Activated CD4-positive, alpha-beta memory T cell treated with anti-CD3 and anti-CD28 coated beads, Interleukin-2, amount 10 ng/mL, durations not matched to agents 7 days and 5 days (primary cell): ENCODE measurements at regions of chr9 and their contacts with region 1.

Region 1: DNA sequence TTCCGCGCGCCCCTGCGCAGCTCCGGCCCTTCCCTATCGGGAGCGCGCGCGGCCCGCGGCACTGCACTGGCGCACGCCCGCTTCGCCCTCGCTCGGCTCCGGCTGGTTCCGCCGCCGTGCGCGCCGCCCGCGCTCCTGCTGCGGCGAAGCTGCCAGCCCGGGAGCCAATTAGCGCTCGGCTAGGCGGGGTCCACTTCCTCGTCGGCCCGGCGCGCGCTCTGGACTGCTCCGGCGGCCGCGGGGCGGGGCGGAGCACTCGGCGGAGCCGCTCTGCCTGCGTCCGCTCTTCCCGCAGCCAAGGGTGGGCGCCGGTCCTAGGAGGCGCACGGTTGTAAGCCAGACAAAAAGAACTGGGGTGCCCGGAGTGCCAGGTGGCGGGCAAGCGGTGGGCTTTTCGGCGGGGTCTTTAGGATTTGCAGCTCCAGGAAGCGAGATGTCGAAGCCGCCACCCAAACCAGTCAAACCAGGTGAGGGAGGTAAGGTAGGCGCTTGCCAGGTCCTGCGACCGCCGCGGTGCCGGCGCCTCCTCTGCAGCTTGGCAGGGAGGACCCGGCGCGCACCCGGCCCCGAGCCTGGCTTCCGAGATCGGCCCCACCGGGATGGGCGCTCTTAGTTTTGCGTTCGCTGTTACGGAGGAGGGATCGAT is at the start of gene OSTF1:
- DNase-seq: peak; percentile 95
- H3K4me3 Mint-ChIP-seq: peak within 1 kb of the TSS; percentile 100
- H3K27ac Mint-ChIP-seq: peak within 1 kb of the TSS; percentile 97
- H3K4me1 Mint-ChIP-seq: peaks cover 63% of the 10 kb centered on the region
- H3K27me3 Mint-ChIP-seq: no peaks in the 10 kb centered on the region
- total RNA-seq, gene OSTF1: 253 to 255 TPM

Region 2: GRCh38 chr9:74773886-74774479 is 314.4 kb before region 1 on chr9:
- CTCF ChIA-PET with region 1: interaction called, 14 read pairs
- POLR2A ChIA-PET with region 1: interaction called, 4 read pairs
- DNase-seq: peak; percentile 76
- H3K4me3 Mint-ChIP-seq: no peak overlapping the region
- H3K27ac Mint-ChIP-seq: no peak overlapping the region
- H3K4me1 Mint-ChIP-seq: peaks cover 16% of the 10 kb centered on the region
- H3K27me3 Mint-ChIP-seq: peaks cover 13% of the 10 kb centered on the region

Region 3: DNA sequence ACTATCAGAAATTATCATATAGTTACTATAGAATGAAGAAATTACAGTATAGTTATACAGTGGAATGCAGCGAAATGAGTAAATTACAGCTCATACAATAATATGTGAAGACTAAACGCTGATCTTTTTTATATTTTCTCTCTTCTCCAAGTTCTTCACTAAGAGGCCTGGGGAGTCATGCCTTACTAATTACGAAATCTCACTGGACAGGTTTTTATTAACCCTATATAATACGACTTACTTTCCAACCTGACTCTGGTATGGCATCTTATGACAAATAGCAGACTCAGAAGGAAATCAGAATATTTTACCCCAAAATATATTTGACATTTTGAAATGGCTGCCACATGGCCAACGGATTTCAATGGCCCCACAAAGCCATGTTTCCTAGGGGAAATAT is 69.4 kb before region 1 on chr9:
- CTCF ChIA-PET with region 1: interaction called, 3 read pairs
- POLR2A ChIA-PET with region 1: interaction called, 98 read pairs
- DNase-seq: no peak
- H3K4me3 Mint-ChIP-seq: no peak overlapping the region
- H3K27ac Mint-ChIP-seq: no peak overlapping the region
- H3K4me1 Mint-ChIP-seq: peaks cover 36% of the 10 kb centered on the region
- H3K27me3 Mint-ChIP-seq: no peaks in the 10 kb centered on the region

Region 4: DNA sequence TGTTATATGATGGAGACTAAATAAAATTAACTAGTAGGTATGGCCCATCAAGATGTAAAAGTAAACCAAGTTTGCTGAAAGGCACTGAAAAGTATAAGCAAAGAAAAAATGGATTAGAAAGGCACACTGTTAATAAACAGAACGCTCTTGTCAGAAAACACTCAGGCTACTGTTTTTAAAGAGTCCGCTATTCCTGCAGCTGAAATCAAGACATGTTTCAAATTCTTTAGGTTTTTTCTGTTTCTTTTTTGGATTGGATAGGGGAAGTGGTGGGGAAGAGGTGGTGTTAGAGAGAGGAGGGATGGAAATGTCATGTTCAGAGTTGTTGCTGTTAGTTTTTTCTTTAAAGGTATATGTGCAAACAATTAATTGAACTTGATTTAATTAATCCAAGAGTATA is 17.5 kb after region 1 on chr9:
- CTCF ChIA-PET with region 1: interaction called, 17 read pairs
- POLR2A ChIA-PET with region 1: interaction called, 14 read pairs
- DNase-seq: no peak
- H3K4me3 Mint-ChIP-seq: no peak overlapping the region
- H3K27ac Mint-ChIP-seq: peak overlapping the region; percentile 13
- H3K4me1 Mint-ChIP-seq: peaks cover 72% of the 10 kb centered on the region
- H3K27me3 Mint-ChIP-seq: no peaks in the 10 kb centered on the region

Region 5: GRCh38 chr9:75148561-75148960 is 60.2 kb after region 1 on chr9:
- CTCF ChIA-PET with region 1: interaction called, 15 read pairs
- POLR2A ChIA-PET with region 1: interaction called, 281 read pairs
- DNase-seq: peak; percentile 56
- H3K4me3 Mint-ChIP-seq: peak overlapping the region; percentile 9
- H3K27ac Mint-ChIP-seq: peak overlapping the region; percentile 91
- H3K4me1 Mint-ChIP-seq: peaks cover 88% of the 10 kb centered on the region
- H3K27me3 Mint-ChIP-seq: no peaks in the 10 kb centered on the region

Region 6: DNA sequence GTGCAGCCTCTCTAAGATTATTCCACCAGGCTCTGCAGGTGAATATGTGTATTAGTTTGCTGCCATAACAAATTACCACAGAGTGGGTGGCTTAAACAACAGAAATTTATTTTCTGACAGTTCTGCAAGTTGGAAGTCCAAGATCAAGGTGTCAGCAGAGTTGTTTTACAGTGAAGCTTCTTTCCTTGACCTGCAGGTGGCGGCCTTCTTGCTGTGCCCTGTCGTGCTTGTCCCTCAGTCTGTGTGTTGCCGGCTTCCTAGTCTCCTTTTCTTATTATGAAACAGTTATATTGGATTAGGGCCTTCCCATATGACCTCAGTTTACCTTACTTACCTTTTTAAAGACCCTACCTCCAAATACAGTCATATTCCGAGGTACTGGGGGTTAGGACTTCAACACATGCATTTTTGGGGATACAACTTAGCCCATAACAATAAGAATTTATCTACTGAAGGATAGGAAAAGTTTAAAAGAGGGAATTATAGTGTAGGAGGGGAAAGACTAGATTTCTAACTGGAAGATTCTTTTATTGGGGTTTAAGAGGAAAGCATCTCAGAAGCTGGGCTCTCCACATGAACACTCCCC is 97.3 kb after region 1 on chr9:
- CTCF ChIA-PET with region 1: interaction called, 26 read pairs
- POLR2A ChIA-PET with region 1: interaction called, 5 read pairs
- DNase-seq: peak; percentile 62
- H3K4me3 Mint-ChIP-seq: no peak overlapping the region
- H3K27ac Mint-ChIP-seq: no peak overlapping the region
- H3K4me1 Mint-ChIP-seq: peaks cover 34% of the 10 kb centered on the region
- H3K27me3 Mint-ChIP-seq: no peaks in the 10 kb centered on the region